CD4-positive, alpha-beta T cell (primary cell): ENCODE measurements at regions of chrX and their contacts with region 1.

Region 1: DNA sequence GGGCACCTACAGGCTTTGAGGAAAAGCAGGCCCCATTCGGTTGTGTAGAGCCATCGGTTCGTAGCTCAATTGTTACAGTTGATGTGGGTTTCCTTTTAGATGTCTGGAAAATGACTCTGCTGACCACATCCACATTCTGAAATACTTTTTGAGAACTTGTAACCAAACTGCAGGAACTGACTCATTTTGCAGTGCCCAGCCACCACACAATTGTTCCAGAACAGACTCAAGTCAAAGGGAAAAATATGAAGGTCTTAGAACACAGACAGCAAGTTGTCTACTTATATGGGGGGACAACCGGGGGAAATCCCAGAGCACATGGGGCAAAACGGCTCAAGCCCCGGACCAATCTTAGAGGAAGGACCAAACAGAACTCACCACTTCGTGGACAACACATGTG is 557.6 kb upstream of the DIPK2B start:
- DNase-seq: peak in 7 of 14 experiments; percentile 11 to 79 (median 42)
- ATAC-seq: peak; percentile 33
- H3K4me3 ChIP-seq: peak overlapping the region; percentile 24
- H3K4me3 Mint-ChIP-seq: peak overlapping the region; percentile 87
- H3K27ac ChIP-seq: peak overlapping the region; percentile 16 to 57
- H3K27ac Mint-ChIP-seq: peak overlapping the region; percentile 88
- H3K4me1 ChIP-seq: peaks cover 49% of the 10 kb centered on the region
- H3K4me1 Mint-ChIP-seq: peaks cover 75% of the 10 kb centered on the region
- H3K27me3 ChIP-seq: no peaks in the 10 kb centered on the region
- H3K27me3 Mint-ChIP-seq: no peaks in the 10 kb centered on the region
- CTCF ChIP-seq: no peak

Region 2: DNA sequence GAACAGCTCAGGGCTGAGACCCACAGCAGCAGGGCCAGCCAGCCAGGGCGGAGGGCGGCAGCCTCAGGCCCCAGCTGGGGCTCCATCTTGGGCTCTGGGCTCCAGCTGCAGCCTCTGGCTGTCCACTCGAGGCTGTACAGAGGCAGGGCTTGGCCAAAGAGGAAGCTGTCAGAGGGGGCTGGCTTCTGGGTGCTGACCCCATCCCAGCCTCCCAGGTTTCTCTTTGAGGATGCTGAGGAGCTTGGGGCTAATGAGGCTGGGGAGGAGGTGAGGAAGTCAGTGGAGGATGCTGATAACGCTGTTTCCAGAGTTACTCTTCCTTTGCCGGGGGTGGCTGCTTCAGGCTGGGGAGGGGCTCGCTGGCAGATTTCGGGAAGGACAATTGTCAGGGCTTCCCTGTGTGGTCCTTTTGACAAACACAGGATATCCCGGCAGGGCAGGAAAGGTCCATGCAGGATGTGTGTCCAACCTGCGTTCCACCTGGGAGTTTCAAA is 557.5 kb before region 1 on chrX and contains the start of gene DIPK2B:
- CTCF ChIA-PET with region 1: no interaction called
- POLR2A ChIA-PET with region 1: no interaction called
- intact Hi-C with region 1: no loop called
- DNase-seq: no peak
- ATAC-seq: no peak
- H3K4me3 ChIP-seq: no peak within 1 kb of the TSS
- H3K4me3 Mint-ChIP-seq: no peak within 1 kb of the TSS
- H3K27ac ChIP-seq: no peak within 1 kb of the TSS
- H3K27ac Mint-ChIP-seq: no peak within 1 kb of the TSS
- H3K4me1 ChIP-seq: no peaks in the 10 kb centered on the region
- H3K4me1 Mint-ChIP-seq: no peaks in the 10 kb centered on the region
- H3K27me3 ChIP-seq: peaks cover 2 to 12% of the 10 kb centered on the region in 2 experiments
- H3K27me3 Mint-ChIP-seq: peaks cover 7% of the 10 kb centered on the region
- CTCF ChIP-seq: no peak
- total RNA-seq, gene DIPK2B: not detected

Region 3: GRCh38 chrX:45719751-45720501 is 38.4 kb before region 1 on chrX:
- CTCF ChIA-PET with region 1: no interaction called
- POLR2A ChIA-PET with region 1: no interaction called
- intact Hi-C with region 1: no loop called
- DNase-seq: no peak
- ATAC-seq: no peak
- H3K4me3 ChIP-seq: no peak overlapping the region
- H3K4me3 Mint-ChIP-seq: no peak overlapping the region
- H3K27ac ChIP-seq: no peak overlapping the region
- H3K27ac Mint-ChIP-seq: no peak overlapping the region
- H3K4me1 ChIP-seq: peaks cover under 1% of the 10 kb centered on the region
- H3K4me1 Mint-ChIP-seq: peaks cover 15% of the 10 kb centered on the region
- H3K27me3 ChIP-seq: no peaks in the 10 kb centered on the region
- H3K27me3 Mint-ChIP-seq: no peaks in the 10 kb centered on the region
- CTCF ChIP-seq: no peak

Region 4: DNA sequence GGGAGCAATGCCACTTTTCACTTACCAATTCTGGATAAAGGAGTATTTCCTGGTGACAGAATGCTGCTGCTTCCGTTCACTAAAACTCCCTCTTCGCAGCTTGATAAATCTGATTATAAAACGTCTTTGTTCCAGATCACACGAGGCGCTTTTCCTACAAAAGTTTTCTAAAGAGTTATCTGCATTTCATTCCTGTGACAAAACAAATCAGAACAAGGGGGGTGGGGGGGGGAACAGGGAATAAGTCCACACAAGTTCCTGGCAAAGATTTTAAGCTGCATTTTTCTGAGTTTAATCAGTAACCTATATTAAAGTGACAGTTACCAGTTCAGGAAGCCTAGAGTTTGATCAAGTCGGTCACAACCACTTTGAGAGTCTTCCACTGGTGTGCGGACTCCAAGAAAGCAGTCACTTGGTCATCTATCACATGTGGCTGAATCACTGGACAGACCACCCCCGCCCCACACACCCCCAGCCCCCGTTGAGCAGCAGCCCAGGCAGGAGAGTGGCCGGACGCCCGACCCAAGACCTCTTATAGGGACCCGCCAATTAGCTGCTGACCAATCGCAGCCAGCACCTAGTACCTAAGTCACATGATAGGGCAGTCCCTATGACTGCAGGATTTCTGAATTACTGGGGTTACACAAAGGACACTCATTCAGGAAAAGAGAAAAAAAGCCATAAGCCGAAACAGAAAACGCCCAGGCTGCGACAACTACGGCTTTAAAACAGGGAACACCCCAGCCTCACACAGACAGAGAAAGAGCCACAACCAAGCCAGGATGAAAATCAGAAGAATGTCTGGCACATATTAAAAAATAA is 11.7 kb after region 1 on chrX:
- CTCF ChIA-PET with region 1: interaction called, 5 read pairs
- POLR2A ChIA-PET with region 1: interaction called, 34 read pairs
- intact Hi-C with region 1: loop called in 1 of 2 experiments (anchors 2 kb)
- DNase-seq: peak in 7 of 14 experiments; percentile 6 to 78 (median 18)
- ATAC-seq: peak; percentile 25
- H3K4me3 ChIP-seq: peak overlapping the region; percentile 64
- H3K4me3 Mint-ChIP-seq: peak overlapping the region; percentile 93
- H3K27ac ChIP-seq: peak overlapping the region; percentile 63 to 71
- H3K27ac Mint-ChIP-seq: peak overlapping the region; percentile 97
- H3K4me1 ChIP-seq: peaks cover 32% of the 10 kb centered on the region
- H3K4me1 Mint-ChIP-seq: peaks cover 89% of the 10 kb centered on the region
- H3K27me3 ChIP-seq: no peaks in the 10 kb centered on the region
- H3K27me3 Mint-ChIP-seq: no peaks in the 10 kb centered on the region
- CTCF ChIP-seq: no peak

Region 5: GRCh38 chrX:45794995-45795337 is 36.6 kb after region 1 on chrX:
- CTCF ChIA-PET with region 1: no interaction called
- POLR2A ChIA-PET with region 1: no interaction called
- intact Hi-C with region 1: loop called in 1 of 2 experiments (anchors 5 kb)
- DNase-seq: no peak
- ATAC-seq: no peak
- H3K4me3 ChIP-seq: no peak overlapping the region
- H3K4me3 Mint-ChIP-seq: no peak overlapping the region
- H3K27ac ChIP-seq: no peak overlapping the region
- H3K27ac Mint-ChIP-seq: no peak overlapping the region
- H3K4me1 ChIP-seq: peaks cover 23% of the 10 kb centered on the region
- H3K4me1 Mint-ChIP-seq: peaks cover 47% of the 10 kb centered on the region
- H3K27me3 ChIP-seq: no peaks in the 10 kb centered on the region
- H3K27me3 Mint-ChIP-seq: no peaks in the 10 kb centered on the region
- CTCF ChIP-seq: no peak

Region 6: DNA sequence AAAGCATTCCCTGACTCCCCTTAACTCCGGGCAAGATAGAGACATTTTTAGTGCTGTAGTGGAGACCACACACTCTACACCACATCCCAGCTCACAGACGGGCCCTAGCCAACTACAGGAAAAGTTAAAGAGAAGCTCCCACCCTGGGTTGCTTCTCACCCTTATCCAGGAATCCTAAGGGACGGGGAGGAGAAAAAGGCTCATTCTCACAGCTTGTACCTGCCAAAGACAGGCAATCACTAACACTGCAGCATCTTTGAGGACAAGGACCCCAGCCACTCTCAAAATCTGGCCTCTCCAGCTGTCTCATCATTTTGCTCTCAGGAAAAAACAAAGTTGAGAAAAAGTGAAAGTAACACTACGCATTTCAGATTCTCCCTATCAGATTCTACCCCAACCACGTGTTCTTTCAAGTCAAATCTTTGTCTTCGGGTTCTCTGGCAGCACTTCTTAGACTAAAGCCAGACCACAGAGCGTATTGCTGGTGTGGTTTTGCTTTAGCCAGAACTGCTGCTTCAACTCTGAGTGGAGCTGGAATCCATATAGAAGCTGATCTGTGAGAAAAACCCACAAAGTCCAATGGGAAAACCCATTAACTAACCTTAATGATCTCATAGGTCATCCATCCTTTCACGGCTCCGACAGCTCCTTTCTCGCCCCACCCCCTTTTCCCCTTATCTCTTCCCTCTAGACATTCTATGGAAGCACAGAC is 48.2 kb after region 1 on chrX:
- CTCF ChIA-PET with region 1: interaction called, 4 read pairs
- POLR2A ChIA-PET with region 1: interaction called, 21 read pairs
- intact Hi-C with region 1: loop called in 1 of 2 experiments (anchors 5 kb)
- DNase-seq: peak in 12 of 14 experiments; percentile 7 to 87 (median 35)
- ATAC-seq: peak; percentile 84
- H3K4me3 ChIP-seq: peak overlapping the region; percentile 50
- H3K4me3 Mint-ChIP-seq: peak overlapping the region; percentile 90
- H3K27ac ChIP-seq: peak overlapping the region; percentile 67 to 82
- H3K27ac Mint-ChIP-seq: peak overlapping the region; percentile 93
- H3K4me1 ChIP-seq: peaks cover 24% of the 10 kb centered on the region
- H3K4me1 Mint-ChIP-seq: peaks cover 74% of the 10 kb centered on the region
- H3K27me3 ChIP-seq: no peaks in the 10 kb centered on the region
- H3K27me3 Mint-ChIP-seq: no peaks in the 10 kb centered on the region
- CTCF ChIP-seq: no peak